Mammary epithelial cell (primary cell): ENCODE measurements at regions of chr12 and their contacts with region 1.

Region 1: GRCh38 chr12:46647034-46647433 is 178.8 kb downstream of the SLC38A4 start:
- DNase-seq: no peak
- H3K4me3 ChIP-seq: no peak overlapping the region
- H3K27ac ChIP-seq: no peak overlapping the region
- H3K4me1 ChIP-seq: no peaks in the 10 kb centered on the region
- H3K27me3 ChIP-seq: no peaks in the 10 kb centered on the region
- CTCF ChIP-seq: no peak

Region 2: GRCh38 chr12:46205294-46205693 is 441.7 kb before region 1 on chr12:
- CTCF ChIA-PET with region 1: no interaction called
- dilution Hi-C with region 1: no loop called
- in situ Hi-C with region 1: no loop called
- intact Hi-C with region 1: no loop called
- DNase-seq: no peak
- H3K4me3 ChIP-seq: no peak overlapping the region
- H3K27ac ChIP-seq: no peak overlapping the region
- H3K4me1 ChIP-seq: peaks cover 16% of the 10 kb centered on the region
- H3K27me3 ChIP-seq: no peaks in the 10 kb centered on the region
- CTCF ChIP-seq: no peak

Region 3: DNA sequence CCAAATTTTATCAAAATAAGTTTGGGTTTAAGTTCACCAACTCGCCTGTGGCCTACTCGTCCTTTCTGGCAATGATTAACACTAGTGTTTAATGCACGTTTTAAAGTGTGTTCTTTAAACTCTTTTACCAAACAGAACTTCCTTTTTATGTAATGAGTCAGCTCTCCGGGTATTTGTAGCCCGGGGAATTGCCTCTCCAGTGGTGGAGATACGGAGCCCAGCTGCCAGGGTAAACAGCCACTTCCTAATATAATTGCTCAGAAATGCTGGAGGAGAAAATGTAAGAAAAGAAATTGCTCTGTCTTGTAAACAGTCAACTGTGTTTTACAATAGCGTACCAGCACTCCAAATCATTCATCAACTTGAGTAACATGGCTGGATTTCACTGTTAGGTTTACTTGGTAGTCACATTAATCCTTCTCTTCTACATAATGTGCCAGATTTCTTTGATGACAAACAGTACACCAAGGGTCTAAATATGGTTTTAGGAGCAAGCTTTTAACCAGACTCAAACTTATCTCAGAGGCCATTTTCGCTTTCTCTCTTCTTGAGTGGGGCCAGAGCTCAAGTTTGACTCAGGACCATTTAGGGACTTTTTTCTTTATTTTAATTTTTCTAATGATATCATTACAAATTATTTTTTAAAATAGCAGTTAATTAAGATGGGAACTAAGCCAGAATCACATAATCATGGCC is 173.3 kb before region 1 on chr12:
- CTCF ChIA-PET with region 1: no interaction called
- dilution Hi-C with region 1: no loop called
- in situ Hi-C with region 1: no loop called
- intact Hi-C with region 1: no loop called
- DNase-seq: peak; percentile 83
- H3K4me3 ChIP-seq: peak overlapping the region in 1 of 3 experiments; percentile 11
- H3K27ac ChIP-seq: peak overlapping the region; percentile 67
- H3K4me1 ChIP-seq: peaks cover 38% of the 10 kb centered on the region
- H3K27me3 ChIP-seq: no peaks in the 10 kb centered on the region
- CTCF ChIP-seq: no peak

Region 4: DNA sequence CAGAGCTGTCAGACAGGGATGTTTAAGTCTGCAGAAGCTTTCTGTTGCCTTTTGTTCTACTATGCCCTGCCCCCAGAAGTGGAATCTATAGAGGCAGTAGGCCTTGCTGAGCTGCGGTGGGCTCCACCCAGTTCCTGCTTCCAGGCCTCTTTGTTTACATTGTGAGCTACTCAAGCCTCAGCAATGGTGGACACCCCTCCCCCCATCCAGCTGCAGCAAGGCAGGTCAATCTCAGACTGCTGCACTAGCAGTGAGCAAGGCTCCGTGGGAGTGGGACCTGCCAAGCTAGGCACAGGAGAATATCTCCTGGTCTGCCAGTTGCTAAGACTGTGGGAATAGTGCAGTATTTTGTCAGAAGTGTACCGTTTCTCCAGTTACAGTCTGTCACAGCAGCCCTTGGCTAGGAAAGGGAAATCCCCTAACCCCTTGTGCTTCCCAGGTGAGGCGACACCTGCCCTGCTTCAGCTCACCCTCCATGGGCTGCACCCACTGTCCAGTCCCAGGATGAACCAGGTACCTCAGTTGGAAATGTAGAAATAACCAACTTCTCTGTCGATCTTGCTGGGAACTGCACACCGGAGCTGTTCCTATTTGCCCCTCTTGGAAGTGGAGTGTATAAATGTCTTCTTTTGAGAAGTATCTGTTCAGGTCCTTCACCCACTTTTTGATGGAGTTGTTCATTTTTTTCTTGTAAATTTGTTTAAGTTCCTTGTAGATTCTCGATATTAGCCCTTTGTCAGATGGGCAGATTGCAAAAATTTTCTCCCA is 61.0 kb before region 1 on chr12:
- CTCF ChIA-PET with region 1: no interaction called
- dilution Hi-C with region 1: loop called (anchors 10 kb)
- in situ Hi-C with region 1: no loop called
- intact Hi-C with region 1: no loop called
- DNase-seq: peak; percentile 30
- H3K4me3 ChIP-seq: no peak overlapping the region
- H3K27ac ChIP-seq: no peak overlapping the region
- H3K4me1 ChIP-seq: no peaks in the 10 kb centered on the region
- H3K27me3 ChIP-seq: no peaks in the 10 kb centered on the region
- CTCF ChIP-seq: no peak